ENCODE measurements at regions of chr6 and their contacts with region 1.

Region 1: GRCh38 chr6:13487122-13488014 is at the start of gene GFOD1:
- DNase-seq: peak; percentile 96
- ATAC-seq: peak; percentile 92
- total RNA-seq, gene GFOD1: 38.8 TPM

Region 2: GRCh38 chr6:13328076-13328874 is 159.1 kb before region 1 on chr6 and contains the start of gene TBC1D7:
- intact Hi-C with region 1: loop called (anchors 2 kb)
- DNase-seq: peak; percentile 94
- ATAC-seq: peak; percentile 96
- total RNA-seq, gene TBC1D7: 32.2 TPM

Region 3: DNA sequence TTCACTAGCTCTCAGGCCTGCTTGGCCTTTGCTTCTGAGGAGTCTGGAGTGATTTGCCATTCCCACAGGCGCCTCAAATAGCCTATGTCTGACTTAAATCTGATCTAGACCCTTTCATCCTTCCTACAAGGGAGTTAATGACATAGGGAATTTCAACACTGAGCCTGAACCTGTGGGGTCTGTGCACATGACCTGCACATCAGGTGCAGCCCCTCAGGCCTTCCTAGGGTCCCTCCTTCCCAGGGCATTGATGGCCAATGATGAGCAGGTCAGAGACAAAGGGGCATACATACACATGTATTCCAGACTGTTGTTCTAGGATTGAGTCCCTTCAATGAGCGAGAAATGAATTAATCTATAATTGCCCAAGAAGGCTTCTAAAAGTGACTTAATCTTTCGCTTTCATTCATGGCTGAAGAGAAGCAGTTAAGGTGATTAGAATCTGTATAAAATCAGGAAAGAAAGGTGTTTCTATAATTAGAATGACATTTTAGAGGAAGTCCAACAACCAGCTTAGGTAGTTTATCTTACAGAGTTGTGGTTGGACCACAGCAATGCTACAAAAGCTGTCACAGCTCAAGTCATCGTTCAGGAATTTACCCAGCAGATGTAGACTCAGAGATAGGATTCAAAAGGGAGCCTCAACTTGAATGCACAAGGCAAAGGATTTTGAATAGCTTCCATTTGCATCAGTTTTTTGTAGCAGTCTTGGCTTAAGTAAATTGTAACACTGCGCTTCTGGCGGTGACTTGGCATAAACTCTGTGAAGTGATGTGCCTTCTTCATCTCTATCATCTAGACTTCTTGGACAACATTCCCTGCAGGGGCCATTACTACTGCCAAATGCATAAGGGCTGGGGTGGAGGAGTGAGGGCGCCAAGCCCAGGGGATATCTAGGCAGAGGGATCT is 132.1 kb before region 1 on chr6:
- intact Hi-C with region 1: loop called (anchors 5 kb)
- DNase-seq: no peak
- ATAC-seq: peak; percentile 36

Region 4: GRCh38 chr6:13470238-13471140 is 16.9 kb before region 1 on chr6:
- intact Hi-C with region 1: loop called (anchors 2 kb)
- DNase-seq: no peak
- ATAC-seq: peak; percentile 64

Region 5: DNA sequence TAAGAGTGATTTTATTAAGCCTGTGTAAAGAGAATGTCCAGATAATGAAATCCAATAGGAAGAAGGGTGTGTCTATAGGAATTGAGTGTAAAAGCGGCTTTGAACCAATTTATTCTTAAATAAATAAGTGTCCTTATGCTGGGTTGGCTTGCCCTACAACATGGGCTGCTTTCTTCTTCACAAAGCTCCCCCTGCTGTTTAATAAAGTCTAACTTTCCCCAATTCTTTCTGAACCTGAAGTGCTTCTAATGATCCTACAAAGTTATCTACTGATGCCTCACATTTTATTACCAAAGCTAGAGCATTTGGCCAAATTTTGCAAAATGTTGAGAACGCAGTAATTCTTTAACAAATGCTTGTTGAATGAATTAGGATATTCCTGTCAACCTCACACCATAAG is 50.7 kb after region 1 on chr6:
- intact Hi-C with region 1: loop called (anchors 2 kb)
- DNase-seq: no peak
- ATAC-seq: peak; percentile 73

Measured in Right ventricle myocardium inferior (tissue), 1 donor.